Activated CD4-positive, alpha-beta memory T cell treated with anti-CD3 and anti-CD28 coated beads for 36 hours (primary cell): ENCODE measurements at regions of chr1 and their contacts with region 1.

Region 1: DNA sequence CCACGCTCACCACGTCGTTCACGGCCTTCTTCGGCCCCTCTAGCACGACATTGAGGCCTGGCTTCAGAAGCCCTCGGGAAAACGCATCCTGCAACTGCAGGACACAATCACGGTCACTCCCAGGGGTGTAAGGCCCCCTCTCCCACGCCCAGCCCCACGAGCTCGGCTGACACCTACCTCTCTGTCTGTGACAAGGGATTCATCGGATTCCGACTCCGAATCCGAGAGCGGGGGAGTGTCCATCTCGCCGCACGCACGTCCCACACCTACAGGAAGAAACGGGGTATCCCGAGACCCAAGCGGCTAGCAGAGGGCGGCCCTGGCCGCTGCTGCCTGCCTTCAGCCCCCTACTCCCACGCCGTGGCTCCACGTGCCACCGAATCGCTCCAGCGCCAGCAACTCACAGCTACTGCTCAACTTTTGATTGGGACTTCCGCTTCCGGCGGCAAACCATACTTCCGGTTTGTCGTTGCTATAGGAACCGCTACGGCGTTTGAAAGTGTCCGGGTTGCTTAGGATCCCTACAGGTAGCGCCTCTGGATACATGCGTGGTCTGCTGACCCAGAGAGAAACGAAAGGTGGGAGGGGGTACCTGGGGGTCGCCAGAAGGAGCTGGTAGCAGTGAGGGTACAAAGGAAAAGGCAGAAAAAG is at the starts of genes CFAP57 and EBNA1BP2:
- DNase-seq: peak; percentile 96
- H3K4me3 Mint-ChIP-seq: peak within 1 kb of the TSS; percentile 98
- H3K27ac Mint-ChIP-seq: peak within 1 kb of the TSS; percentile 76
- H3K4me1 Mint-ChIP-seq: peaks cover 27% of the 10 kb centered on the region
- H3K27me3 Mint-ChIP-seq: peaks cover 16% of the 10 kb centered on the region
- total RNA-seq, gene CFAP57: 0.43 TPM in 1 of 2 experiments, not detected in the other
- total RNA-seq, gene EBNA1BP2: 97.5 to 104 TPM

Region 2: GRCh38 chr1:42846257-42847110 is 325.5 kb before region 1 on chr1 and contains the start of gene ZNF691:
- CTCF ChIA-PET with region 1: no interaction called
- POLR2A ChIA-PET with region 1: no interaction called
- intact Hi-C with region 1: loop called (anchors 1 kb)
- DNase-seq: peak; percentile 94
- H3K4me3 Mint-ChIP-seq: peak within 1 kb of the TSS; percentile 89
- H3K27ac Mint-ChIP-seq: peak within 1 kb of the TSS; percentile 72
- H3K4me1 Mint-ChIP-seq: peaks cover 44% of the 10 kb centered on the region
- H3K27me3 Mint-ChIP-seq: no peaks in the 10 kb centered on the region
- total RNA-seq, gene ZNF691: 8.6 to 9.5 TPM

Region 3: DNA sequence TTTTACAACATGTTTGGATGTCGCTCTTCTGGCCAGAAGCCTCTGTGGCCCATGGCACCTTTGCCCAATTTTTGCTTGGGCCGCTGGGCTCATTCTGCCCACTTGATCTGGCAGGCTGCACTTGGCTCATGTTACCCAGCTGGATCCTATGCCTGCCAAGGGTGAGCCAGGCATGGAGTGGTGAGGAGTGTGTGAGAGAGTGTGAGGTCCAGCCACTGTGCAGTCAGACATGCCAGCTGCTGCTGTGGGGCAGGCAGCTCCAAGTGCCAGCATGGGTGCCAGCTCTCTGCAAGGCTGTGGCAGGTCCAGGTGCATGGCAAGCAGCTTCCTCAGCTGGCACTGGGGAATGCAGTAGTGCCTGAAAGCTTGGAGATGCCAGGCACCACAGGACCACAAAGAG is 70.9 kb before region 1 on chr1:
- CTCF ChIA-PET with region 1: no interaction called
- POLR2A ChIA-PET with region 1: no interaction called
- intact Hi-C with region 1: no loop called
- DNase-seq: no peak
- H3K4me3 Mint-ChIP-seq: no peak overlapping the region
- H3K27ac Mint-ChIP-seq: no peak overlapping the region
- H3K4me1 Mint-ChIP-seq: no peaks in the 10 kb centered on the region
- H3K27me3 Mint-ChIP-seq: no peaks in the 10 kb centered on the region

Region 4: GRCh38 chr1:43358746-43359693 is 187.0 kb after region 1 on chr1 and contains the start of gene CDC20:
- CTCF ChIA-PET with region 1: no interaction called
- POLR2A ChIA-PET with region 1: no interaction called
- intact Hi-C with region 1: loop called (anchors 2 kb)
- DNase-seq: peak; percentile 100
- H3K4me3 Mint-ChIP-seq: peak within 1 kb of the TSS; percentile 84
- H3K27ac Mint-ChIP-seq: peak within 1 kb of the TSS; percentile 74
- H3K4me1 Mint-ChIP-seq: peaks cover 28% of the 10 kb centered on the region
- H3K27me3 Mint-ChIP-seq: no peaks in the 10 kb centered on the region
- total RNA-seq, gene CDC20: 152 to 155 TPM

Region 5: GRCh38 chr1:43650310-43651085 is 478.5 kb after region 1 on chr1:
- CTCF ChIA-PET with region 1: no interaction called
- POLR2A ChIA-PET with region 1: interaction called, 3 read pairs
- intact Hi-C with region 1: loop called (anchors 1 kb)
- DNase-seq: peak; percentile 94
- H3K4me3 Mint-ChIP-seq: peak overlapping the region; percentile 99
- H3K27ac Mint-ChIP-seq: peak overlapping the region; percentile 98
- H3K4me1 Mint-ChIP-seq: peaks cover 30% of the 10 kb centered on the region
- H3K27me3 Mint-ChIP-seq: no peaks in the 10 kb centered on the region